CD8-positive, alpha-beta T cell (primary cell): ENCODE measurements at regions of chr1 and their contacts with region 1.

Region 1: DNA sequence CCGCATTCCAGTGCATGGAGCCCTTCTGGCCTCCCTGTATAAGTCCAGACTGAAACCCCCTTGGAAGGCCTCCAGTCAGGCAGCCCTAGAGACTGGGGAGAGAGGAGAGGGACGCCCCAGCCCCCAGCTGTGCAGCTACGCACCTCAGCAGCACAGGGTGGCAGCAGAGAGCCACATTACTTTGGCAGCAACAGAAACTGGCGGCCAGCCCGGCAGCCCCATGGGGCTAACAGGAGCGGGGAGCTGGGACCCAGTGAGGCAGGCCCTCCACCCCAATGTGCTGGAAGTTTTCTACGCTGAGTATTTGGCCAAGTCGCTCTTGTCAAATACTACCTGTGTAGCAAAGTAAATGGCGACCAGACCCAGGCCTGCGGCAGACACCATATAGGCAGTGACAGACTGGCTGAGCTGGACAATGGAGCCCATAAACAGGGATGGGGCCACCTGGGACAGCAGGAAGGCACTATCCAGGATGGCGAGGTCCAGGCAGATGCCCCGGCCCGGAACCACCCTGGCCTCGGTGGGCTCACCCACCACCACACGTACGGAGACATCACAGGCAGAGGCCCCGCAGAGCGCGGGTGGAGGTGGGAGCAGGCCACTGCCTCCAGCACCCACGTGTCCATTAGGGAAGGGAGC is 21.2 kb downstream of the SLC45A3 start:
- DNase-seq: peak; percentile 57 to 82 (median 75)
- ATAC-seq: peak; percentile 88
- H3K4me3 ChIP-seq: no peak overlapping the region
- H3K4me3 Mint-ChIP-seq: no peak overlapping the region
- H3K27ac ChIP-seq: no peak overlapping the region
- H3K27ac Mint-ChIP-seq: no peak overlapping the region
- H3K4me1 ChIP-seq: no peaks in the 10 kb centered on the region
- H3K4me1 Mint-ChIP-seq: no peaks in the 10 kb centered on the region
- H3K27me3 ChIP-seq: no peaks in the 10 kb centered on the region
- H3K27me3 Mint-ChIP-seq: no peaks in the 10 kb centered on the region
- CTCF ChIP-seq: peak; percentile 82

Region 2: DNA sequence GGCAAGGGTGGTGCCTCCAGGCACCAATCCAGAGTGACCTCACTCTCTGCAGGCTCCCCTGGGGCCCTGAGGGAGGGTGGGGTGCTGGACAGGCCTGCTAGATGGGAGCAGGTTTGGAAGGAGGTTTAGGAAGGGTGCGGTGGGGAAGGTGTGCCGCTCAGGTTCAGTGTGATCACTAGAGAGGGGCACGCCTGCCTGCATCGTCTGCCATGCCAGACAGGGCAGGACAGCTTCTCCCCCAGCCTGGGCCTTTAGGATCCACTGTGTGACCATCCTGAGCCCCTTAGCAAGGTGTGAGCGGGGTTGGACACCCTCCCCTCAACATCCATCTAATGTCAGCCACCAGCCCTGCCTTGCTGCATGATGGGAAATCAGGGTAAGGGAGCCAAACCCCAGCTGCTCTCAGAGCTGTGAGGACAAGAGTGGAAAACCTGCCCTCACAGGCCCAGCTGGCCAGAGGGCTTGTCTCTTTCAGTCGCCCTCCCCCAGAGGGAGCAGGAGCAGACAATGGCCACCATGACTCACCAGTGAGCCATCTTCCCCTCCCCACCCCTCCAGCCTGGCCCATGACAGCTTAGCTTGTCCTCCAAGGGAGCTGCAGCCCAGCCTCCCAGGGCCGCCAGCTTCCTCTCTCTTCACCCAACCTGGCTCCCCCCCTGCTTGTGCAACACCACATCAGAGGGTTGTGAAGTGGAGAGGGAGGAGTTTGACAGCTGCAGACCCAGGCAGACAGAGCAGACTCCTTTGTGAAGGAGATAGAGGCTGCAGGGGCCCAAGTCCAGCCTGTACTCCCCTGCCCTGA is 374.5 kb before region 1 on chr1:
- CTCF ChIA-PET with region 1: no interaction called
- POLR2A ChIA-PET with region 1: no interaction called
- intact Hi-C with region 1: no loop called
- DNase-seq: peak; percentile 78 to 96 (median 93)
- ATAC-seq: peak; percentile 62
- H3K4me3 ChIP-seq: peak overlapping the region; percentile 34 to 40
- H3K4me3 Mint-ChIP-seq: peak overlapping the region; percentile 83
- H3K27ac ChIP-seq: peak overlapping the region; percentile 56 to 71
- H3K27ac Mint-ChIP-seq: peak overlapping the region; percentile 96
- H3K4me1 ChIP-seq: peaks cover 81% of the 10 kb centered on the region
- H3K4me1 Mint-ChIP-seq: peaks cover 85% of the 10 kb centered on the region
- H3K27me3 ChIP-seq: no peaks in the 10 kb centered on the region
- H3K27me3 Mint-ChIP-seq: no peaks in the 10 kb centered on the region
- CTCF ChIP-seq: no peak

Region 3: GRCh38 chr1:205528887-205529825 is 129.9 kb before region 1 on chr1:
- CTCF ChIA-PET with region 1: interaction called, 254 read pairs
- POLR2A ChIA-PET with region 1: no interaction called
- intact Hi-C with region 1: loop called in 1 of 2 experiments (anchors 1 kb)
- DNase-seq: peak; percentile 68 to 92 (median 80)
- ATAC-seq: peak; percentile 90
- H3K4me3 ChIP-seq: peak overlapping the region in 1 of 2 experiments; percentile 26
- H3K4me3 Mint-ChIP-seq: peak overlapping the region; percentile 58
- H3K27ac ChIP-seq: no peak overlapping the region
- H3K27ac Mint-ChIP-seq: no peak overlapping the region
- H3K4me1 ChIP-seq: no peaks in the 10 kb centered on the region
- H3K4me1 Mint-ChIP-seq: peaks cover 5% of the 10 kb centered on the region
- H3K27me3 ChIP-seq: no peaks in the 10 kb centered on the region
- H3K27me3 Mint-ChIP-seq: no peaks in the 10 kb centered on the region
- CTCF ChIP-seq: peak; percentile 90

Region 4: DNA sequence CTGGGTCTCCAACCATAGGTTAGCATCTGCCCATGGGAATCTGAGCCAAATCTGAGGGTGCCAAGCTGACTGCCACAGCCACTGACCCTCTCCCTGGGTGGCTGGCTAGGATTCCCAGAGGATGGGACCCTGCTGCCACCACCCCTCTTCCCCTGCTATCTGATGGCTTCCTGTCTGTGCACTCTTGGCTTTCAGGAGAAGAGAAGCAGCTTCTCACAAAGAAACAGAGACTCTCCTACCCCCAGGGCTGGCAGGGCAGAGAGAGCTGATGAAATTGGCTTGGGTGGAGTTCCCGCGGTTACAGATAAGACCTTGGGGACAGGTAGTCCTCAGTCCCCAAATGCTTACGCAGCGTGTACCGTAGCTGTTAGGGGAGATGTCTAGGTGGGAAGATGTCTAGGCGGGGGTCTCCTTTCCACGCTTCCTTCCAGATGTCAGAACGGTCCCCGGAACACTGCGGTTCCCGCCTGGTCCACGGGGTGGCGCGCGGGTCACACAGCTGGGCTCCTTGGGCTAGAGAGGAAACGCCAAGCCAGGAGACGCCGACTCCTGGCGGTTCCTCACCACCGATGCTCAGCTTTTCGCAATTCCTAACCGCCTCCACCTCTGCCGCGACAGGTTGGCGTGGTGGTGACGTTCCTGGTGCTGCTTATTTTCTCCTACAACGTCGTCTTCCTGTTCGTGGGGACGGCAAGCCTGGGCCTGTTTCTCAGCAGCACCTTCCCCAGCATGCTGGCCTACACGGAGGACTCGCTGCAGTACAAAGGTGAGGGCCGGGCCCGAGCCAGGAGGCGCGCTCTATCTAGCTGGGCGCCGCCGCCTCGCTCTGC is 67.3 kb before region 1 on chr1:
- CTCF ChIA-PET with region 1: interaction called, 401 read pairs
- POLR2A ChIA-PET with region 1: interaction called, 65 read pairs
- intact Hi-C with region 1: loop called (anchors 1 kb)
- DNase-seq: peak; percentile 83 to 95 (median 91)
- ATAC-seq: peak; percentile 88
- H3K4me3 ChIP-seq: peak overlapping the region; percentile 52 to 62
- H3K4me3 Mint-ChIP-seq: peak overlapping the region; percentile 90
- H3K27ac ChIP-seq: peak overlapping the region; percentile 60 to 80
- H3K27ac Mint-ChIP-seq: peak overlapping the region; percentile 95
- H3K4me1 ChIP-seq: peaks cover 23% of the 10 kb centered on the region
- H3K4me1 Mint-ChIP-seq: peaks cover 49% of the 10 kb centered on the region
- H3K27me3 ChIP-seq: no peaks in the 10 kb centered on the region
- H3K27me3 Mint-ChIP-seq: no peaks in the 10 kb centered on the region
- CTCF ChIP-seq: peak; percentile 98

Region 5: GRCh38 chr1:205645519-205645918 is 13.5 kb before region 1 on chr1:
- CTCF ChIA-PET with region 1: interaction called, 35 read pairs
- POLR2A ChIA-PET with region 1: no interaction called
- intact Hi-C with region 1: no loop called
- DNase-seq: no peak
- ATAC-seq: no peak
- H3K4me3 ChIP-seq: no peak overlapping the region
- H3K4me3 Mint-ChIP-seq: no peak overlapping the region
- H3K27ac ChIP-seq: no peak overlapping the region
- H3K27ac Mint-ChIP-seq: no peak overlapping the region
- H3K4me1 ChIP-seq: no peaks in the 10 kb centered on the region
- H3K4me1 Mint-ChIP-seq: no peaks in the 10 kb centered on the region
- H3K27me3 ChIP-seq: no peaks in the 10 kb centered on the region
- H3K27me3 Mint-ChIP-seq: peaks cover 8% of the 10 kb centered on the region
- CTCF ChIP-seq: no peak

Region 6: GRCh38 chr1:205783904-205784303 is 124.8 kb after region 1 on chr1:
- CTCF ChIA-PET with region 1: interaction called, 24 read pairs
- POLR2A ChIA-PET with region 1: no interaction called
- intact Hi-C with region 1: loop called (anchors 1 kb)
- DNase-seq: no peak
- ATAC-seq: no peak
- H3K4me3 ChIP-seq: no peak overlapping the region
- H3K4me3 Mint-ChIP-seq: no peak overlapping the region
- H3K27ac ChIP-seq: no peak overlapping the region
- H3K27ac Mint-ChIP-seq: no peak overlapping the region
- H3K4me1 ChIP-seq: peaks cover 6% of the 10 kb centered on the region
- H3K4me1 Mint-ChIP-seq: peaks cover 6% of the 10 kb centered on the region
- H3K27me3 ChIP-seq: no peaks in the 10 kb centered on the region
- H3K27me3 Mint-ChIP-seq: no peaks in the 10 kb centered on the region
- CTCF ChIP-seq: no peak

Region 7: DNA sequence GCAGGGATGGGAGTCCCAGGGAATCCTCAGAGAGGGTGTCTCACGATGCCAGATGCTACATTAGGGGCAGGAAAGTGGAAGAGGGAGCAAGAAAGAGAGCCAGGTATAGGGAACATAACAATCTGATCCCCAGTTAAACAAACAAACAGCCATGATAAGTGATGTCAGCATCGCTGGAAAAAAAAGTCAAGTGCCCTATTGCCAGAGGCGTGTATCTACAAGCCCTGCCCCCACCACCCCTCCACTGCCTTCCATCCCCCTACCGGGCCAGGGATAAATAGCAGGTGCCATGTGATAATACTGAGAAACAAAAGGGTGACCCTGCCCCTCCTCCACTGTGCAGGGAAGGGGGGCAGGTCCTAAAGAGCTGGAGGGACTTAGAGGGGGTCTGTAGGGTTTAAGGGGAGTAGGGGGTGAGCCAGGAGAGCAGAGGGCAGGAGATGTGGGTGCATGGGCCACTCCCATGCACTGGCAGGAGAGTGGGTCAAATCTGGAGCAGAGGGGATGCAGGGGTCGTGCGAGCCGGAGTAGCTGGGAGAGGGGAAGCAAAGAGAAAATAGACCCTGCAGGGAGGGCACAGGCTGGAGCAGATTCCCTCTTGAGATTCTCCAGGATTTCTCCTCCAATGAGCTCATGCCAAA is 280.7 kb after region 1 on chr1:
- CTCF ChIA-PET with region 1: no interaction called
- POLR2A ChIA-PET with region 1: no interaction called
- intact Hi-C with region 1: no loop called
- DNase-seq: no peak
- ATAC-seq: no peak
- H3K4me3 ChIP-seq: no peak overlapping the region
- H3K4me3 Mint-ChIP-seq: no peak overlapping the region
- H3K27ac ChIP-seq: no peak overlapping the region
- H3K27ac Mint-ChIP-seq: no peak overlapping the region
- H3K4me1 ChIP-seq: no peaks in the 10 kb centered on the region
- H3K4me1 Mint-ChIP-seq: no peaks in the 10 kb centered on the region
- H3K27me3 ChIP-seq: peaks cover 0 to 2% of the 10 kb centered on the region in 2 experiments
- H3K27me3 Mint-ChIP-seq: peaks cover 56% of the 10 kb centered on the region
- CTCF ChIP-seq: no peak

Region 8: DNA sequence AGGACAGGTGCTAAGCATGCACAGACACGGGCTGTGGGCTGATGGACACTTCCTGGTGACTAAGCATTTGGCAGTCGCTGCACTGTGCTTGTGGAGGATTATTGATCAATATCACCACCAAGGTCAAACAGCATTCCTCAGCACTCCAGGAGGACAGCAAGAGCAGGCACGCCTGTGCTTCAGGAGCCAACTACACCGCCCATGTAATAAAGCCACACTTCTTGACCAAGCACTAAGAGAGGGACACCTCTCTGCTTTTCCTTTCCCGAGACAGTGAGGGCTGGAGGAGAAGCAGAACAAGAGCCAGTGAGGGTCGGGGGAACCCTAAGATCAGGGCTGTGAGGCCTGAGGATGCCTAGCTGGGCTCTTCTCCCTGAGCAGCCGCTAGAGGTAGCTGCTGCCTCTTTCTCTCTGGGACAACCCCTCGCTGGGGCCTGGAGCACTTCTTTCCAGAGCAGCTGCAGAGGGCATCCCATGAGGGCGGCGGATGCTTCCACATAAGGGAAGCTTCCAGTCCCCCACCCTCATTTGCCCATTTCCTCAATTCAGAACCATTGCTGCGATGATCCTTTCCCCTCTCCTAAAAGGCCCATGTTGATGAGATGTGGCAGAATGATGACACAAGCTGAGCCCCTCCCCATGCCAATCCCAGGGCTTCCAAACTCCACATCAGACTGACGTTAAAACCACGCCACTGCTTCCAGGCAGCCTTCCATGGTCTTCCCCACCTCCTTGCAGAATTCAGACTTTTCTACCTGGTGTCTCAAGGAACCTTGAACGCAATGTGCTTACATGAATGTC is 325.1 kb after region 1 on chr1:
- CTCF ChIA-PET with region 1: interaction called, 89 read pairs
- POLR2A ChIA-PET with region 1: no interaction called
- intact Hi-C with region 1: no loop called
- DNase-seq: peak in 1 of 9 experiments; percentile 19
- ATAC-seq: no peak
- H3K4me3 ChIP-seq: no peak overlapping the region
- H3K4me3 Mint-ChIP-seq: no peak overlapping the region
- H3K27ac ChIP-seq: no peak overlapping the region
- H3K27ac Mint-ChIP-seq: no peak overlapping the region
- H3K4me1 ChIP-seq: no peaks in the 10 kb centered on the region
- H3K4me1 Mint-ChIP-seq: no peaks in the 10 kb centered on the region
- H3K27me3 ChIP-seq: no peaks in the 10 kb centered on the region
- H3K27me3 Mint-ChIP-seq: no peaks in the 10 kb centered on the region
- CTCF ChIP-seq: no peak